OCI-LY7 (cell line): ENCODE measurements at regions of chr9 and their contacts with region 1.

Region 1: GRCh38 chr9:33081128-33081851 is 4.8 kb upstream of the SMU1 start:
- DNase-seq: peak; percentile 86
- H3K4me3 ChIP-seq: peak overlapping the region; percentile 41
- H3K27ac ChIP-seq: no peak overlapping the region
- H3K4me1 ChIP-seq: peaks cover 23% of the 10 kb centered on the region
- CTCF ChIP-seq: peak; percentile 97

Region 2: GRCh38 chr9:32764140-32764539 is 317.1 kb before region 1 on chr9:
- CTCF ChIA-PET with region 1: no interaction called
- POLR2A ChIA-PET with region 1: no interaction called
- intact Hi-C with region 1: no loop called
- DNase-seq: no peak
- H3K4me3 ChIP-seq: no peak overlapping the region
- H3K27ac ChIP-seq: no peak overlapping the region
- H3K4me1 ChIP-seq: no peaks in the 10 kb centered on the region
- CTCF ChIP-seq: no peak

Region 3: GRCh38 chr9:33167046-33167808 is 85.9 kb after region 1 on chr9 and contains the start of gene B4GALT1:
- CTCF ChIA-PET with region 1: interaction called, 3 read pairs
- POLR2A ChIA-PET with region 1: interaction called, 4 read pairs
- intact Hi-C with region 1: loop called (anchors 1 kb)
- DNase-seq: peak; percentile 95
- H3K4me3 ChIP-seq: peak within 1 kb of the TSS; percentile 93
- H3K27ac ChIP-seq: peak within 1 kb of the TSS; percentile 68
- H3K4me1 ChIP-seq: peaks cover 49% of the 10 kb centered on the region
- CTCF ChIP-seq: 0 out of 2 replicates have a peak, but pooled peaks have one; percentile 23
- total RNA-seq, gene B4GALT1: 8.1 and 12.8 TPM in 2 replicates